ENCODE measurements at regions of chr14 and their contacts with region 1.

Region 1: DNA sequence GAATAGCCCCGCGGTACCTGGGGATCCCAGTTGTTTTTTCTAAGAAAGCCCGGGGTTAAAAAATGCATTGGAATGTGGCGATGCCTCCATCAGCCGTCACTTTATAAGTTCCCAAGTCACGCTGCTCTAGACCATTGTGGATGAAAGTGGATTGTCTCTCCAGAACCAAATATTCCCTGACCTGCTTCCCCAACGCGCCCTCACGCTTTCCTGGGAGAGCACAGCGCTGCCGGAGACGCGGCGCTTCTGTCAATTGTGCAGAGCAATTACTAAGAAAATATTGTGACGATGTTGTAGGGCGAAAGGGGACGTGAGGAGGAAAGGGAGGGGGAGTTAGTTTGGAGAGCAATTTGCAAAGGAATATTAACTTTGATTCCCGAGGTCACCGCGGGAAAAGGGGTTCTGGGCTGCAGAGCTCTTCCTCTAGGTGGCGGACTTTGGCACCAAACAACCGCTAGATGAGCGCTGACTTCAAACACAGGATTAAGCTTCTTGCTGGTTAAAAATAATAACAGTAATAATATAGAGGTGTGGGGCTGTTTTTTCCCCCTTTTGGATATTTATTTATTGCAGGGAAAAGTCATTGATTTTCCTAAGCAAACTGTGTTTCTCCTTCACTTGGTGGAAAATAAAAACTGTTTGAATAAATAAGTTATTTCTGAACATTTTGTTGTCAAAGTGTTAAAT is 9.6 kb upstream of the FOXG1 start:
- DNase-seq: peak; percentile 54
- ATAC-seq: peak; percentile 59; the same call in 1 of the 2 replicates
- H3K4me3 ChIP-seq: peak overlapping the region; percentile 13; the same call in 1 of the 2 replicates
- H3K27ac ChIP-seq: no peak overlapping the region
- H3K4me1 ChIP-seq: no peaks in the 10 kb centered on the region
- H3K27me3 ChIP-seq: peaks cover 68% of the 10 kb centered on the region
- CTCF ChIP-seq: peak; percentile 68
- POLR2A ChIP-seq: no peak
- RAD21 ChIP-seq: peak; percentile 51

Region 2: DNA sequence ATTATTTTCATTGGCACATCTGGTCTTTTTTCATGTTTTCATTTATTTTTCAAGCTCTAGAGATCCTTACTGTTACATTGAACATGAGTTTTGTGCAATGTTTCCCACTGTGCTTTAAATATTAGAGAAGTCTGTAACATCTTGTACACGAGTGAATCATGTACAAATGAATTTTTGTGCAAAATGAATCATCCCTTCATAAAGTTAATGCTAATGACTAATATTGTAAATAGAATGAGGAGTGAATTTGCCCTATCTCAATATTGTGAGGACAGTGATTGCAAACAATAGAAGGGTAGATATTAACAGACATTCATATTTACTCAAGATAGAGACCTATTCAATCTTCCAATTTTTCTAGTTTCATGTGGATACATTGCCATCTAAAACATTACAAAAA is 453.8 kb before region 1 on chr14:
- CTCF ChIA-PET with region 1: no interaction called
- POLR2A ChIA-PET with region 1: no interaction called
- dilution Hi-C with region 1: no loop called
- in situ Hi-C with region 1: no loop called
- intact Hi-C with region 1: no loop called
- DNase-seq: no peak
- ATAC-seq: no peak
- H3K4me3 ChIP-seq: no peak overlapping the region
- H3K27ac ChIP-seq: no peak overlapping the region
- H3K4me1 ChIP-seq: no peaks in the 10 kb centered on the region
- H3K27me3 ChIP-seq: no peaks in the 10 kb centered on the region
- CTCF ChIP-seq: no peak
- POLR2A ChIP-seq: no peak
- RAD21 ChIP-seq: no peak

Region 3: GRCh38 chr14:29242755-29243754 is 486.0 kb after region 1 on chr14:
- CTCF ChIA-PET with region 1: no interaction called
- POLR2A ChIA-PET with region 1: no interaction called
- dilution Hi-C with region 1: no loop called
- in situ Hi-C with region 1: no loop called
- intact Hi-C with region 1: no loop called
- DNase-seq: peak; percentile 8
- ATAC-seq: peak; percentile 19
- H3K4me3 ChIP-seq: no peak overlapping the region
- H3K27ac ChIP-seq: no peak overlapping the region
- H3K4me1 ChIP-seq: peaks cover 2% of the 10 kb centered on the region
- H3K27me3 ChIP-seq: no peaks in the 10 kb centered on the region
- CTCF ChIP-seq: no peak
- POLR2A ChIP-seq: no peak
- RAD21 ChIP-seq: no peak

Region 4: DNA sequence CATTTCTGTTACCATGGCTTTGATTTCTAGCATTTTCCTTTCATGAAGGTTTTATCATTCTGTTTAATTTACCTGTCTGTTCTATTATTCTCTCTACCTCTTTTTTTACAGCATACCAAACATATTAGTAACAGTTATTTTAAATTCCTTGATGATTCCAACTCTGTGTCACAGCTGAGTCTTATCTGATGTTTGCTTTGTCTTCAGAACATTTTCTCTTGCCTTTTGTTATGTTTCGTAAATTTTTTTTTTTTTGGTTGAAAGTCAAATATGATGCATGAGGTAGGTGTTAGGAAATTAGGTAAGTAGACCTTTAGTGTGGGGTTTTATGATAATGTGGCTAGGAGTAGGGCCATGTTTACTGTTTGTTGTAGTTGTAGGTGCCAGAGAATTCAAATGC is 506.0 kb after region 1 on chr14:
- CTCF ChIA-PET with region 1: no interaction called
- POLR2A ChIA-PET with region 1: interaction called, 16 read pairs
- dilution Hi-C with region 1: no loop called
- in situ Hi-C with region 1: no loop called
- intact Hi-C with region 1: no loop called
- DNase-seq: peak; percentile 20
- ATAC-seq: no peak
- H3K4me3 ChIP-seq: no peak overlapping the region
- H3K27ac ChIP-seq: no peak overlapping the region
- H3K4me1 ChIP-seq: peaks cover 2% of the 10 kb centered on the region; the same call in 1 of the 2 replicates
- H3K27me3 ChIP-seq: no peaks in the 10 kb centered on the region
- CTCF ChIP-seq: no peak
- POLR2A ChIP-seq: no peak
- RAD21 ChIP-seq: no peak